PC-3 (cell line): ENCODE measurements at regions of chr22 and their contacts with region 1.

Region 1: DNA sequence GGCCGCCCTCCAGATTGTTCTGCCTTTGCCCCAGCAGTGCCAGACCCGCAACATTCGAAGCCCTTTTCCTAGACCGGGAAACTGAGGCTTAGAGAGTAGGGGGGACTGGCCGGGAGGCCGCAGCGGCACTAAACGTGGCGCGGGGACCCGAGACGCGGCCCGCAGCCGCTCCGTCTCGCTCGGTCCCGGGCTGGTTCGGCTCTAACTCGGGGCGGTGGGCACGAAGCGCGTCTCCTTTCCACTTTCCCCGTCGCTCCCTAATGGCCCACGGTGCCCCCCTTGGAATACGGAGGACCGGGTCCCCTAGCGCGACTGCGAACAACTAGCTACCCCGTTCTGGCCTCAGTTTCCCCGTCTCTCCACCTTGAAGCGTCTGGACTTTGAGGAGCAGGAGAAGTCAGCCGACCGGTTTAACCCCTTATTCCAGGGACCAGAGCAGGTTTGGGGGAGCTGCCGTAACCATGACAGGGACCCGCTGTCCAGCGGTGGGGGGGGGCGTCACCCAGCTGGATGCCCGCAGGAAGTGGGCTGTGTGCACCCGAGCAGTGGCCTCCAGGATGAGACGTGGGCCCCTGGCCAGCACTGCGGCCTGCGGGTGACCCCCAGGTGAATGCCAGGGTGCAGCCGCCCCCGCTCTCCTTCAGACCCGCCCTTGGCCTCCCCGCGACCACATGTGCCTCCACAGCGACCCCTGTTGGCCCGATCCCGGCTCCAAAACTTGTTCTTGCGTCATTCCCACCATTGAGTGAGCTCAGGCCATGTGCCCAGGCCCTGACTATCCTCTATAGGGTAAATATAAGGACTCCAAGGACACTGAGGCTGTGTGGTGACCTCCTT is 1.1 kb downstream of the CDC42EP1 start:
- DNase-seq: peak; percentile 84
- ATAC-seq: peak; percentile 23
- H3K4me3 ChIP-seq: peak overlapping the region; percentile 87
- H3K27ac ChIP-seq: peak overlapping the region; percentile 75
- H3K4me1 ChIP-seq: peaks cover 40% of the 10 kb centered on the region
- H3K27me3 ChIP-seq: no peaks in the 10 kb centered on the region
- CTCF ChIP-seq: peak; percentile 74

Region 2: GRCh38 chr22:37498289-37498909 is 63.0 kb before region 1 on chr22:
- CTCF ChIA-PET with region 1: no interaction called
- POLR2A ChIA-PET with region 1: no interaction called
- intact Hi-C with region 1: no loop called
- DNase-seq: no peak
- ATAC-seq: no peak
- H3K4me3 ChIP-seq: no peak overlapping the region
- H3K27ac ChIP-seq: no peak overlapping the region
- H3K4me1 ChIP-seq: peaks cover 42% of the 10 kb centered on the region
- H3K27me3 ChIP-seq: no peaks in the 10 kb centered on the region
- CTCF ChIP-seq: peak; percentile 46

Region 3: DNA sequence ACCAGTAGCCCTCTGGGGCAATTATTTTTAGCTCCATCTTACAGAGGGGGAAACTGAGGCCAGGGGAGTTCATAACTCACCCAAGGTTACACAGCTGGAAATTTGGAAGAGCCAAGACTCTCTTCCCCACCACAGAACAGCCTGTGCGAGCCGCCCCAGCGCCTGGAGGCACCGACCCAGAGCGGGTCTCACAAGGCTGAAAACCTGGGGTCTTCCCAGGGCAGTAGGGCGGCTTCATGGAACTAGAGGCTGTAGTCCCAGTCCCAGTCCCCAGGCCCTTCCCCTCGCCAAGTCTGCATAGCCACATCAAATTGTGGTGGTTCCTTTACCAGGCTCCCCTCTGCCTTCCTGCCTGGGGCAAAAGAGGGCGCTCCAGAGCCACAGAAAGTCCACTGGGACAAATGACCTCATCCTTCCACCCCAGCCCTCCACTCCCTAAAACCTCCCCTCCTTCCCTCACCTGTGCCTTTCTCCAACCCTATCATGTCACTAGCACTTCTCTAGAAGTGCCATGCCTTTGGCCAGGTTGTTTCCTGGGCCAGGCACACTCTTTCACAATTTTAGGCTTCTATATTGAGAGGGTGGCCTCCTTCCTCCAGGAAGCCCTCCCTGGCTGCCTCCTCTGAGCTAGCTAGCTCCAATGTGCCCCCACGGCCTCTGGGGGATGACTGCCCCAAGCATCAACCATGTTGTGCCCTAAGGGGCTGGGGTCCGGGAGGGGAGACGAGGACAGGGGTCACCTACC is 16.3 kb before region 1 on chr22:
- CTCF ChIA-PET with region 1: interaction called, 7 read pairs
- POLR2A ChIA-PET with region 1: interaction called, 11 read pairs
- intact Hi-C with region 1: no loop called
- DNase-seq: peak; percentile 78
- ATAC-seq: peak; percentile 39
- H3K4me3 ChIP-seq: no peak overlapping the region
- H3K27ac ChIP-seq: no peak overlapping the region
- H3K4me1 ChIP-seq: peaks cover 28% of the 10 kb centered on the region
- H3K27me3 ChIP-seq: no peaks in the 10 kb centered on the region
- CTCF ChIP-seq: peak; percentile 74

Region 4: GRCh38 chr22:37764622-37765021 is 203.2 kb after region 1 on chr22:
- CTCF ChIA-PET with region 1: no interaction called
- POLR2A ChIA-PET with region 1: no interaction called
- intact Hi-C with region 1: no loop called
- DNase-seq: no peak
- ATAC-seq: no peak
- H3K4me3 ChIP-seq: no peak overlapping the region
- H3K27ac ChIP-seq: no peak overlapping the region
- H3K4me1 ChIP-seq: peaks cover 5% of the 10 kb centered on the region; the same call in 1 of the 2 replicates
- H3K27me3 ChIP-seq: no peaks in the 10 kb centered on the region
- CTCF ChIP-seq: no peak

Region 5: GRCh38 chr22:37777122-37777687 is 215.8 kb after region 1 on chr22:
- CTCF ChIA-PET with region 1: no interaction called
- POLR2A ChIA-PET with region 1: no interaction called
- intact Hi-C with region 1: no loop called
- DNase-seq: peak; percentile 96
- ATAC-seq: peak; percentile 69
- H3K4me3 ChIP-seq: no peak overlapping the region
- H3K27ac ChIP-seq: peak overlapping the region; percentile 99
- H3K4me1 ChIP-seq: peaks cover 46% of the 10 kb centered on the region
- H3K27me3 ChIP-seq: no peaks in the 10 kb centered on the region
- CTCF ChIP-seq: no peak

Region 6: DNA sequence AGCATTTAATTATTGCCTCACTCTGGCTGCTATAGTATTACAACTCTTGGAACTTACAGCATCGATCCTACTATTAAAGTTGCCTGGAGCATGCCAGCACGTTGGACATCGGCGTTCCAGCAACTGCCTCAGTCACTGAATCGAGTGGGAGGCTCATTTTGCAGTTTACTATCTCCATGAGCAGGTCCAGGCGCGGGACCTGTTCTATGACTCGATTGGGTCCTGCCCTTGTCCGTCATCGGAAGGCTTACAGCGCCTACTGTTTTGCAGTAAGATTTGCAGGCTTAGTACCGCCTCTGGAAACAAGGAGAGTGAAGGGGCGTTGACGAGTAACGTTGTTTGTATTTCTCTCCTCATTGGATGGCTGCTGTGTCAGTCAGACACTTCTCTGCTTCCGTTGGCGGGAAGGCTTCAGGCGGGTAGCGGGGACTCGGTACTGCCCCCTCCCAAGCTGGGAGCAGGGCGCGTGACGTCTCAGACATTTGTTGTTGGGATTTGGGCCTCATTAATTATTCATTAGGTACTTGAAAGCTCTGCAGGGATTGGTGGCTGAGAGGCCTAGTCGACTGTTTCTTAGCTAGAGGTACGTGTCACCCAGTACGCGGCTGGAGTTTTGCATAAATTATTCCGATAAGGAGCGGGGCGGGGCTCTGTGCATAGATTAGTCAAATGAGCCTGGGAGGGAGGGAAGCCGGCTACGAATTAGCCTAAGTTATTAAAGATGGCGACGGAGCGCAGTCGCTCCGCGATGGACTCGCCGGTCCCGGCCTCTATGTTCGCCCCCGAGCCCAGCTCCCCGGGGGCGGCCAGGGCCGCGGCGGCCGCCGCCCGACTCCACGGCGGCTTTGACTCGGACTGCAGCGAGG is 1144.0 kb after region 1 on chr22 and contains the start of gene GTPBP1:
- CTCF ChIA-PET with region 1: no interaction called
- POLR2A ChIA-PET with region 1: interaction called, 39 read pairs
- intact Hi-C with region 1: no loop called
- DNase-seq: peak; percentile 98
- ATAC-seq: peak; percentile 73
- H3K4me3 ChIP-seq: peak within 1 kb of the TSS; percentile 95
- H3K27ac ChIP-seq: peak within 1 kb of the TSS; percentile 67
- H3K4me1 ChIP-seq: peaks cover 32% of the 10 kb centered on the region
- H3K27me3 ChIP-seq: no peaks in the 10 kb centered on the region
- CTCF ChIP-seq: no peak
- total RNA-seq, gene GTPBP1: 28.2 and 29.6 TPM in 2 replicates